Caco-2 (cell line): ENCODE measurements at regions of chr17 and their contacts with region 1.

Region 1: DNA sequence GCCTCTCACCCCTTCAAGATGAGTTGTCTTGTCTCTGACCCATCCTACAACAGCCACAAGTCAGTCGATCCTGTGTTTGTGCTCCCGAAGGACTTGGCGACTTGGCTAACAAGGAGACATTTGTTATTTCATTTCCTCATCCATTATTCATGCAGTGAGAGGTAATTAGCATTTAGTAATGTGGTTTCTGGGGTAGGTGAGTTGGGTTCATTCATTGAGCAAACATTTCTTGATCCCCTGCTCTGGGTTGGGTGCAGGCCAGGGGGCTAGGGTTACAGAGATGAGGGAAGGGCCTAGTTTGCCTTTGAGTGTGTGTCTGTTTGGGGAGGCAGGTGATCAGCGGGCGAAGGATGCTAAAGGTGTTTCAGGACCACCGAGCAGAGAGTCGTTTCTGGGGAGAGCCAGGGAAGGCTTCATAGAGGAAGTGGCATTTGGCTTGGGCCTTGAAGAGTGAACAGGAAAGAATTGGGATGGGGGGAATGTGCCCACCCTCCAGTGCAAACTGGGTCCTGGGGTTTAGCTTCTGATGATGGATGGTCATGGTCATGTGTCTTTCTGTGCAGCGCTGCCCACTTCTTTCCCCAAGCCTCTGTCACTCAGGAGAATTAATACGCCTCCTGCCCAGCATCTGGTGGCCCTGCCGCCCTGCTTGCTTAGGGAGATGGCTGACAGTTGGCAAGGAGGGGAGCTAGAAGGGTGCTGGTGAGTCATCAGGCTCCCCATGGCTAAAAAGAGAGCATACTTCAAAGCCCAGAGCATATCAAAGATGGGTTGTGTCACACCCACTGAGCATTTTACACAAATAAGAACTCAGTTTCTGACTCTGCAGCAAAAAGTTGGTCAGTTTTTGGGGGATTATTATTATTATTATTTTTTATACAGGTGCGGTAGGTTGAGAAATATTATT is 38.6 kb downstream of the MSI2 start:
- DNase-seq: peak; percentile 35 to 62
- H3K4me3 ChIP-seq: no peak overlapping the region
- H3K4me3 Mint-ChIP-seq: peak overlapping the region; percentile 34
- H3K27ac Mint-ChIP-seq: peak overlapping the region; percentile 86
- H3K4me1 ChIP-seq: peaks cover 48% of the 10 kb centered on the region
- H3K4me1 Mint-ChIP-seq: peaks cover 57% of the 10 kb centered on the region
- H3K27me3 ChIP-seq: no peaks in the 10 kb centered on the region
- H3K27me3 Mint-ChIP-seq: no peaks in the 10 kb centered on the region
- CTCF ChIP-seq: no peak

Region 2: DNA sequence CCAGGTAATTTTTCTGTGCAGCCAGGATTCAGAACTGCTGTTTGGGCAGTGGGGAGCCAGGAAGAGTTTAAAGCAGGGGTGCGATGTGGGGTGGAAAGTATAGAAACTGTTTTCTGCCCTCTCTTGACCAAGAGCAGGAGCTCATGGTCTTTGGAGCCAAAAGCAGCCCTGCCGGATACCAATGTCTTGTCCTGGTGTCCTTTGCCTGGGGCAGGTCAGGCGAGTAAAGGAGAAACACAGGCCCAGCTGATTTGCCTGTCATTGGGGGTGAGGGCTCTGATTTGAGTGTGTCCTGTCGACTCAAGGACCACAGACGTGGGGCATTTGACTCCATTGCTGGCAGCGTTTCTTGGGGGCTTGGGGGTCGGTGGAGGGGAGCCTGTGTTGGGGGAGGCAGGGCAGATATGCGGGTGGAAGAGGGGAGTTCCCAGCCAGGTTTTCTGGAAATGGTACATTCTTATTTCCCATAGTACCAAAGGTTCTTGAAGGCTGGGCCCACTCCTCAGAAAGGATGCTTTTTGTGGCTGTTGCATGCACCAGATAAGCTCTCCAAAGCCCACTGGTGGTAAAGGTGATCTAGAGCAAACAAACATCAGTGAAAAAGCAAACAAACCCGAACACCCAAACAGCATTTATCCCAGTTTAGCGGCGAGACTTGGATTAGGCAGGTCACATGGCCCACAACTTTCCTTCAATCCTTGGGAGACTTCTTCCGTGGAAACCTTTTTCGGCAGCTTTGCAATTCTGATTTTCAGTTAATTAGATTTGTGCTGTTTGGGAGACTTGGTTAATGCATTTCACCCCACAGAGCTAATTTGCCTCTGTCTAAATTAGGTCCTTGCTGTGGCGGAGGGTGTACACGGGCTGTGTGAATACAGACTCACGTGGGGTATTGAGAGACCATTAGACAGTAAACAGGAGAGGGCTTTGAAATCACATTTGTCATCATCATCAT is 20.5 kb after region 1 on chr17:
- CTCF ChIA-PET with region 1: no interaction called
- POLR2A ChIA-PET with region 1: interaction called, 27 read pairs
- intact Hi-C with region 1: no loop called
- DNase-seq: no peak
- H3K4me3 ChIP-seq: no peak overlapping the region
- H3K4me3 Mint-ChIP-seq: no peak overlapping the region
- H3K27ac Mint-ChIP-seq: peak overlapping the region; percentile 15
- H3K4me1 ChIP-seq: peaks cover 7% of the 10 kb centered on the region
- H3K4me1 Mint-ChIP-seq: peaks cover 18% of the 10 kb centered on the region
- H3K27me3 ChIP-seq: no peaks in the 10 kb centered on the region
- H3K27me3 Mint-ChIP-seq: no peaks in the 10 kb centered on the region
- CTCF ChIP-seq: no peak

Region 3: DNA sequence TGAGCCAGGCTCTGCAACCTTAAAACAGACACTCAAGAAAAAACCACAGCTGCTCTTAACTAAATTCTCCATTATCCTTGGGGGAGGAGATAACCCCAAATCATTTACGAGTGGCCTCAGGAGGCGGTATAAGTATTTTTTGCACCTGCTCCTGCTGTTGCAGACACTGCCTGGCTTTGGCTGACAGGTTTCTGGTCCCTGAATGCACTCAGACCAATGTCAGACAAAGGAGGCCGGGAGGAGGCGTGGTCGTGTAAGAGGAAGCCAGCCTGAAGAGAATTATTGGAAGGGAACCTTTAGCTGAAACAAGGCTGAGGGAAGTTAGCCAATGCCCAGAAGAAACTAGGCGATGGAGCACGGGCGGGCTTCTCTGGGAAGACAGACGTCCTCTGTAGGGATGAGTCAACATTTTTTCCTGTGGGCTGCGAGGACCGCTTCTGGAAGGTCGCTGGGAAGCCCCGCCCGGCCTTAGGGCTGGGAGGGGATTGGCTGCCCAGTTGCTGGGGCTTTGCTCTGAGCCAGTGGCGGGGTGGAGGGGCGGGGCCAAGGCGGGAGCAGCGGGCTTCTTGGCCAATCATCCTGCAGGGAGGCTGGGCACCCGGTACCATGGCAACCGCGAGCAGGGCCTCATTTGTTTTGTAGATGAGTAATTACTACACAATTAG is 367.9 kb after region 1 on chr17:
- CTCF ChIA-PET with region 1: no interaction called
- POLR2A ChIA-PET with region 1: interaction called, 10 read pairs
- intact Hi-C with region 1: no loop called
- DNase-seq: peak; percentile 88
- H3K4me3 ChIP-seq: peak overlapping the region; percentile 17
- H3K4me3 Mint-ChIP-seq: peak overlapping the region; percentile 67
- H3K27ac Mint-ChIP-seq: peak overlapping the region; percentile 50
- H3K4me1 ChIP-seq: peaks cover 5% of the 10 kb centered on the region; the same call in 1 of the 2 replicates
- H3K4me1 Mint-ChIP-seq: no peaks in the 10 kb centered on the region
- H3K27me3 ChIP-seq: no peaks in the 10 kb centered on the region
- H3K27me3 Mint-ChIP-seq: no peaks in the 10 kb centered on the region
- CTCF ChIP-seq: no peak